ENCODE measurements at regions of chr1 and their contacts with region 1.

Region 1: GRCh38 chr1:161292631-161293030 is 17.1 kb downstream of the MPZ start:
- DNase-seq: no peak
- ATAC-seq: no peak
- H3K4me3 ChIP-seq: no peak overlapping the region
- H3K27ac ChIP-seq: no peak overlapping the region
- H3K4me1 ChIP-seq: peaks cover 2% of the 10 kb centered on the region; the same call in 1 of the 2 replicates
- H3K27me3 ChIP-seq: no peaks in the 10 kb centered on the region
- CTCF ChIP-seq: no peak
- EP300 ChIP-seq: no peak
- POLR2A ChIP-seq: no peak
- RAD21 ChIP-seq: no peak

Region 2: GRCh38 chr1:161172776-161173376 is 119.8 kb before region 1 on chr1:
- CTCF ChIA-PET with region 1: no interaction called
- POLR2A ChIA-PET with region 1: no interaction called
- RAD21 ChIA-PET with region 1: no interaction called
- SMC1A ChIA-PET with region 1: no interaction called
- in situ Hi-C with region 1: no loop called
- intact Hi-C with region 1: no loop called
- DNase-seq: no peak
- ATAC-seq: no peak
- H3K4me3 ChIP-seq: no peak overlapping the region
- H3K27ac ChIP-seq: no peak overlapping the region
- H3K4me1 ChIP-seq: peaks cover 17% of the 10 kb centered on the region
- H3K27me3 ChIP-seq: no peaks in the 10 kb centered on the region
- CTCF ChIP-seq: no peak
- EP300 ChIP-seq: no peak
- POLR2A ChIP-seq: no peak
- RAD21 ChIP-seq: no peak

Region 3: DNA sequence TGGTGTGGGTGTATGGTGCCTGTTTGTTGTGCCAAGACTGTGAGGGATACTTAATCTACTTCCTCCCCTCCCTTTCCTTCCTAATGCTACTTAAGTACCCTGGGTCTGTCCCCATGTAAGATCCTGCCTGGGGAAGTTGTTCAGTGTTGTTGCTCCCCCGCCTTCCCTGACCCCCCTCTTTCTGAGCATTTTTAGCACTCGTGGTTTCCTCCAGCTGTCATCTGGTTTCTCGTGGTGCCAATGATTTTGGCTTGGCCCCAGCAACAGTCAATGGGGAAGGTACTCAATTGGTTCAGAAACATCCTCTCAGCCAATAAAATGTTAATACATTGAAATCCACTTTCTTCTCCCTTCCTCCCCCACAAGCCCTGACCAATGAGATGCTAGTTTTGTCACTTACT is 107.3 kb before region 1 on chr1:
- CTCF ChIA-PET with region 1: interaction called, 24 read pairs
- POLR2A ChIA-PET with region 1: no interaction called
- RAD21 ChIA-PET with region 1: interaction called, 7 read pairs
- SMC1A ChIA-PET with region 1: interaction called, 3 read pairs
- in situ Hi-C with region 1: no loop called
- intact Hi-C with region 1: no loop called
- DNase-seq: peak; percentile 98
- ATAC-seq: peak; percentile 84
- H3K4me3 ChIP-seq: no peak overlapping the region
- H3K27ac ChIP-seq: peak overlapping the region; percentile 97
- H3K4me1 ChIP-seq: peaks cover 57% of the 10 kb centered on the region
- H3K27me3 ChIP-seq: no peaks in the 10 kb centered on the region
- CTCF ChIP-seq: no peak
- EP300 ChIP-seq: no peak; a peak in 1 of 4 replicates
- POLR2A ChIP-seq: peak; percentile 42; the same call in 1 of the 2 replicates
- RAD21 ChIP-seq: no peak

Region 4: DNA sequence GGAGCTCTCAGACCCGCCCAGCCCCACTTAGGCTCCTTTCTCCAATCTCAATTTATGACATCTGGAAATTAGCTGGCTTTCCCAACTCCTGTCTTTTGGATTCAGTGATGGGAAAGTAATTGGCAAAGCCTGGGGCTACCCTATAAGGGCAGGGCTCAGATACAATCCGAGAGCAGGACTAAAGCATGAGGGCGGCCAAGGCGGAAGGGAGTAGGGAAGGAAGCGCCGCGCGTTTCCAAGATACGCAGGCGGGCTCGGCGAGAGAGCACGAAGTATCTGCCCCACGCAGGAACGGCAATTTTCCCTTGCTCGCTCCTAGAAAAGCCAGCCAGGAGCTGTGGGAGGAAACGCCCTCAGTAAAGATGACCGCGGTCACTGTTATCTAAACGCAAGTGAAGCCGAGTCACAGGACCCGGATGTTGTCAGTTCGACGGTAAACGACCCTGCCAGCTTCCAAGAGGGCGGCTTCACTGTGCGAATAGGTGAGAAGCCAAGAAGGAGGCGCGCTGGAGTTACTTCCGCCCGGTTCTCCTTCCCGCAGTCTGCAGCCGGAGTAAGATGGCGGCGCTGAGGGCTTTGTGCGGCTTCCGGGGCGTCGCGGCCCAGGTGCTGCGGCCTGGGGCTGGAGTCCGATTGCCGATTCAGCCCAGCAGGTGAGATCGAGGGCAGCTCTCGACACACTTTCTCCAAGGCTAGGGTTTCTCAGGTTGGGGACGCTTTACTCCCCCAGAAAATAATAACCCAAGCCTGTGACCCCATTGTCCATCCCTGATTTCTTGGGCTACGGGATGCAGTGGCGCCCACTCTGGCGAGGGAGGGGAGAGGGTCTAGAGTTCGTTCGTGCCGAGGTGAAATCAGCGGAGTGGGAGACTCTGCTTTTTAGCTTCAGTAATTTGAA is 90.6 kb before region 1 on chr1 and contains the start of gene NDUFS2:
- CTCF ChIA-PET with region 1: interaction called, 13 read pairs
- POLR2A ChIA-PET with region 1: no interaction called
- RAD21 ChIA-PET with region 1: interaction called, 3 read pairs
- SMC1A ChIA-PET with region 1: interaction called, 5 read pairs
- in situ Hi-C with region 1: no loop called
- intact Hi-C with region 1: loop called (anchors 5 kb)
- DNase-seq: peak; percentile 94
- ATAC-seq: peak; percentile 99
- H3K4me3 ChIP-seq: peak within 1 kb of the TSS; percentile 95
- H3K27ac ChIP-seq: peak within 1 kb of the TSS; percentile 86
- H3K4me1 ChIP-seq: peaks cover 21% of the 10 kb centered on the region
- H3K27me3 ChIP-seq: no peaks in the 10 kb centered on the region
- CTCF ChIP-seq: peak in 1 of 3 experiments; percentile 5; a peak in 2 of 6 replicates
- EP300 ChIP-seq: no peak
- POLR2A ChIP-seq: peak; percentile 96
- RAD21 ChIP-seq: no peak
- polyA plus RNA-seq, gene NDUFS2: 66.5 to 93.9 TPM

Region 5: GRCh38 chr1:161216945-161217712 is 75.5 kb before region 1 on chr1:
- CTCF ChIA-PET with region 1: interaction called, 16 read pairs
- POLR2A ChIA-PET with region 1: no interaction called
- RAD21 ChIA-PET with region 1: interaction called, 6 read pairs
- SMC1A ChIA-PET with region 1: interaction called, 5 read pairs
- in situ Hi-C with region 1: no loop called
- intact Hi-C with region 1: no loop called
- DNase-seq: peak; percentile 92
- ATAC-seq: peak; percentile 95
- H3K4me3 ChIP-seq: peak overlapping the region; percentile 8; the same call in 1 of the 2 replicates
- H3K27ac ChIP-seq: peak overlapping the region; percentile 24
- H3K4me1 ChIP-seq: peaks cover 21% of the 10 kb centered on the region
- H3K27me3 ChIP-seq: no peaks in the 10 kb centered on the region
- CTCF ChIP-seq: no peak
- EP300 ChIP-seq: peak; percentile 11 to 73; a peak in 1 of 4 replicates
- POLR2A ChIP-seq: no peak
- RAD21 ChIP-seq: no peak

Region 6: DNA sequence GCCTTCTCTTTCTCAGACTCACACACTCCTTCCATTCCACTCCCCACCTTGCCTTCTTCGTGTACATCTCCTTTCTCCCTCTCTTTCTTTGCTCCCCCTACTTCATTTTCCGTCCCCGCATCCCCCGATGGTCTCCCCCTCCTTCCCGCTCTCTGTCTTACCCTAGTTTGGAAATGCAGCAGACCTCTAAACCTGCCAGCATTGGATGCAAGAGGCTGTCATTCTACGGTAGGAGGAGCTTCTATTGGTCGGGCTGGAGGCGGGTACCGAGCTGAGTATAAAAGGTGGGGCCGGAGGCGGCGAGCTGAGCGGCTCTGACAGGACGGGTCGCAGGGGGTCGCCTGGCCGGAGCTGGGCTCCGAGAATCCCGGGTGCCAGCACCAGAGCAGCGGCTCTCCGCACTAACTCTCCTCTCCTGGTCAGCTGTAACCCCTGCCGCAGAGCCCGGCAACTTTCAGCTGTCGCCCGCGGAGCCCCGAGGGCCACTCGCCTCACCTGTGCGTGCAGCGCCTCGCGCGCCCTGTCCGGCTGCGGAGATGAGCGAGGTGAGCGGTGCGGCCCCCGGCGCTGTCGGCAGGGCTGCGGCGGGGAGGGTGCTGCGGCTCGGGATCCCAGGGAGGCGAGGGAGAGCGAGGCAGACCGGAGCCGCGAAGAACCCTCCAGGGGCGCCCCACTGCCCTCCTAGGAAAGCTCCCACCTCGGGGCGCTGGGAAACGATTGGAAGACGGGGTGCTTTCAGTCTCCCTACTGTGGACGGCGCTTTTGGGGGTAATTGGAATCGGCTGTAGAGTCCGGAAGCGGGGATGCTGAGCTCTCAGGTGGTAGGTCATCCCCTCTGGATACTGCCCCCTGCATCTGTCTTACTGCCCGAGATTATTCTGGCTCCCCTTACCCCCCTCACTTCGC is 33.9 kb before region 1 on chr1 and contains the start of gene PCP4L1:
- CTCF ChIA-PET with region 1: interaction called, 16 read pairs
- POLR2A ChIA-PET with region 1: no interaction called
- RAD21 ChIA-PET with region 1: interaction called, 3 read pairs
- SMC1A ChIA-PET with region 1: interaction called, 5 read pairs
- in situ Hi-C with region 1: no loop called
- intact Hi-C with region 1: no loop called
- DNase-seq: no peak
- ATAC-seq: peak; percentile 76
- H3K4me3 ChIP-seq: peak within 1 kb of the TSS; percentile 47
- H3K27ac ChIP-seq: no peak within 1 kb of the TSS
- H3K4me1 ChIP-seq: peaks cover 13% of the 10 kb centered on the region
- H3K27me3 ChIP-seq: peaks cover 0 to 5% of the 10 kb centered on the region in 2 experiments; a peak in 1 of 4 replicates
- CTCF ChIP-seq: no peak
- EP300 ChIP-seq: no peak
- POLR2A ChIP-seq: no peak
- RAD21 ChIP-seq: no peak
- polyA plus RNA-seq, gene PCP4L1: 1.0 to 1.1 TPM

Region 7: GRCh38 chr1:161305867-161306519 is 13.4 kb after region 1 on chr1:
- CTCF ChIA-PET with region 1: interaction called, 66 read pairs
- POLR2A ChIA-PET with region 1: interaction called, 5 read pairs
- RAD21 ChIA-PET with region 1: interaction called, 8 read pairs
- SMC1A ChIA-PET with region 1: interaction called, 11 read pairs
- in situ Hi-C with region 1: no loop called
- intact Hi-C with region 1: no loop called
- DNase-seq: peak; percentile 65
- ATAC-seq: peak; percentile 92
- H3K4me3 ChIP-seq: peak overlapping the region; percentile 94
- H3K27ac ChIP-seq: peak overlapping the region; percentile 13; the same call in 1 of the 2 replicates
- H3K4me1 ChIP-seq: peaks cover 12% of the 10 kb centered on the region
- H3K27me3 ChIP-seq: no peaks in the 10 kb centered on the region
- CTCF ChIP-seq: peak; percentile 41 to 51 (median 51); a peak in 5 of 6 replicates
- EP300 ChIP-seq: no peak
- POLR2A ChIP-seq: peak; percentile 77
- RAD21 ChIP-seq: peak; percentile 38; the same call in 1 of the 2 replicates

Region 8: DNA sequence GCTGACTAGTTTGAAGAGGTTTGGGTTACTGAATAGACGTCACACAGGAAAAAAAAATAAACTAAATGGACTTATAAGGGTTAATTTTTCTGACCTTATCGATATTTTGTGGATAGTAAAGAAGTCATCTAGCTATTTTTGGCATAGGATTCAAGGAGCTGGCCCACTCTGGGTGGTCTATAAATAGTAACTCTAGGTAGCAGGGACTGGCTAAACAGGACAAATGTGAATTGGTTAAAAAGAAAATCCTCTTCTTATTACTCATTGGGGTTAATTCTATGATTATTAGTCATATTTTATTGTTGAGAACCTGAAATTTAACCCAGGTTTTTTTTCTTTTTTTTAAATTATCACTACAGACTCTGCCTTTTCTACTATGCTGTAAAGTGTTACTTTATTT is 535.2 kb after region 1 on chr1:
- CTCF ChIA-PET with region 1: no interaction called
- POLR2A ChIA-PET with region 1: no interaction called
- RAD21 ChIA-PET with region 1: no interaction called
- SMC1A ChIA-PET with region 1: no interaction called
- in situ Hi-C with region 1: no loop called
- intact Hi-C with region 1: no loop called
- DNase-seq: no peak
- ATAC-seq: no peak
- H3K4me3 ChIP-seq: no peak overlapping the region
- H3K27ac ChIP-seq: no peak overlapping the region
- H3K4me1 ChIP-seq: no peaks in the 10 kb centered on the region
- H3K27me3 ChIP-seq: no peaks in the 10 kb centered on the region
- CTCF ChIP-seq: no peak
- EP300 ChIP-seq: no peak
- POLR2A ChIP-seq: no peak
- RAD21 ChIP-seq: no peak